MCF 10A (cell line): ENCODE measurements at regions of chr12 and their contacts with region 1.

Region 1: GRCh38 chr12:14167005-14167628 is 185.7 kb upstream of the GRIN2B start:
- DNase-seq: peak; percentile 68
- H3K4me3 Mint-ChIP-seq: no peak overlapping the region
- H3K27ac Mint-ChIP-seq: no peak overlapping the region
- H3K4me1 Mint-ChIP-seq: no peaks in the 10 kb centered on the region
- H3K27me3 Mint-ChIP-seq: peaks cover 9% of the 10 kb centered on the region
- CTCF ChIP-seq: peak; percentile 95

Region 2: GRCh38 chr12:13740150-13740547 is 427.0 kb before region 1 on chr12:
- CTCF ChIA-PET with region 1: interaction called, 38 read pairs
- POLR2A ChIA-PET with region 1: no interaction called
- intact Hi-C with region 1: loop called (anchors 1 kb)
- DNase-seq: no peak
- H3K4me3 Mint-ChIP-seq: no peak overlapping the region
- H3K27ac Mint-ChIP-seq: no peak overlapping the region
- H3K4me1 Mint-ChIP-seq: no peaks in the 10 kb centered on the region
- H3K27me3 Mint-ChIP-seq: peaks cover 28% of the 10 kb centered on the region
- CTCF ChIP-seq: no peak

Region 3: DNA sequence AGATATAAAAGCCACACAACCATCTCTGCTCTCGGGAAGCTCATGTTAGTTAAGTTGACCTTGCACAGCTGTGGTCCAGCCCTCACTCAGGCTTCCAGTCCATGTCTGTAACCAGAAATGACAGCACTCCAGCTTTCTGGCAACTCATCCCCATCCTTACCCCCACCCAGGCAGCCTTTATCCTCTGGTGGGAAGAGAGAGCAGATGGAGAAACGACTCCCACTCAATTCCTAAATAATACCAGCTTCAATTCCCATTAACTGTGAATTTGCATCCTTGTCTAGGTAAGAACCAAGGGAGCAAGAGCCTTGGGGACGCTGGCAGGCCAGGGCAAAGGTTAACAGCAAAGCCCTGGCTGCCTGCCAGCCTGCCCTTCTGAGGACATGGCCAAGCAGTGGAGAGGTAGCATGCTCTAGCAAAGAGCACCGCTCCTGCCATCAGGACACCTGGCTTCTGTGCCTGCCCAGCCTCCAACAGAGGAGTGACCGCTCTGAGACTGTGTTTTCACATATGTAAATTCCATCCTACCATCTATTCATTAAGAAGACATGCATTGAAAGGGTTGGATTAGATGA is 421.9 kb before region 1 on chr12:
- CTCF ChIA-PET with region 1: interaction called, 38 read pairs
- POLR2A ChIA-PET with region 1: no interaction called
- intact Hi-C with region 1: no loop called
- DNase-seq: no peak
- H3K4me3 Mint-ChIP-seq: no peak overlapping the region
- H3K27ac Mint-ChIP-seq: no peak overlapping the region
- H3K4me1 Mint-ChIP-seq: no peaks in the 10 kb centered on the region
- H3K27me3 Mint-ChIP-seq: peaks cover 56% of the 10 kb centered on the region
- CTCF ChIP-seq: no peak

Region 4: GRCh38 chr12:14314801-14315200 is 147.7 kb after region 1 on chr12:
- CTCF ChIA-PET with region 1: no interaction called
- POLR2A ChIA-PET with region 1: no interaction called
- intact Hi-C with region 1: no loop called
- DNase-seq: no peak
- H3K4me3 Mint-ChIP-seq: no peak overlapping the region
- H3K27ac Mint-ChIP-seq: peak overlapping the region; percentile 57
- H3K4me1 Mint-ChIP-seq: no peaks in the 10 kb centered on the region
- H3K27me3 Mint-ChIP-seq: no peaks in the 10 kb centered on the region
- CTCF ChIP-seq: no peak